ENCODE measurements at regions of chr19 and their contacts with region 1.

Region 1: GRCh38 chr19:53394974-53395839 is at the start of gene ZNF765:
- DNase-seq: peak; percentile 84
- H3K4me3 ChIP-seq: peak within 1 kb of the TSS; percentile 64 to 99 (median 71)
- H3K27ac ChIP-seq: peak within 1 kb of the TSS; percentile 91
- H3K4me1 ChIP-seq: peaks cover 4% of the 10 kb centered on the region
- H3K27me3 ChIP-seq: no peaks in the 10 kb centered on the region
- CTCF ChIP-seq: peak in 1 of 2 donors; percentile 54
- total RNA-seq, gene ZNF765: 6.7 to 10.5 TPM

Region 2: DNA sequence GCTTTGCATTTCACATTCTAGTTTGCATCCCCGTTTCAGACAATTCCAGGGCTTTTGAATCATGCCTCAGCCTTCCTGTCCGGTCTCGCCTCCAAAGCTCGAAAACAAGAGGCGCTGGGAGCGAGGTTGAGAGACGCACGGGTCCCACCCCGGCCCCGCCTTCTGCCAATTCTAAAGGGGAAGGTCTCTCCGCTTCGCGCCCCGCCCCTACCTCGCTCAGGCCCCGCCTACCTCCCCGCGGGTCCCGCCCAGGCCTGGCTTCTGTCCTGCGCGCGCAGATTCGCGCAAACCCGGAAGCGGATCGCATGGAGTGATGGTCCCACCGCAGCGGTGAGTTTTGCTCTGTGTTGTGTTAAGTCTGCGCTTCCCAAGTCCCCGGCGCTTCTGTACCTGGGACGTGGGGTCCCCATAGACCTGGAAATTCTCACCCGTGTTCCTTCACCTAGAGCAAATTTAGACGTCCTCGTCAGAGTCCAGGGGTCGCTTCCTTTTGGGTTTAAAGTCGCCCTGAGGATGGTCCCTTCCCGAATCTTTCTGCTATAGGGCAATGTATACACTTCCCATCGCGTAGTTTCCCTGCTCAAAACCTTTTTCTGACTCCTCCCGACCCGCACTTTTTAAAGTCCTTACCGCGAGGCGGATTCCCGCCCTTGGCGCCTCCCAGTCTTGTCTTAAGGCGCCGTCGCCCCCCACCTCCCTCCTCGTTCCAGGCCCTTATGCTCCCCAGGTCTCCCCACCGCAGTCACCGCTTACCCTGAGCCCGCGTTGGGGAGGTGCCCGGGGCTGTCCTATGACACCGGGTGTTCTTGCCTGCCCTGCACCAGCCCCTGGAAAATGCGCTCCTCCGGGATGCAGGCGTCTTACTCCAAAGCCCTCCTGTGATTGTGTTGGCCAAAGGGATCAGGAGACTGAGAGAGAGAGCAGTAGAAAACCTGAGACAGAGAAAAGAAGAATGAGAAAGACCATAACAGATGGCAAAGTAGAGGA is 61.5 kb before region 1 on chr19 and contains the start of gene ZNF845:
- CTCF ChIA-PET with region 1: no interaction called
- dilution Hi-C with region 1: no loop called
- in situ Hi-C with region 1: no loop called
- intact Hi-C with region 1: loop called (anchors 2 kb)
- DNase-seq: peak; percentile 93
- H3K4me3 ChIP-seq: peak within 1 kb of the TSS; percentile 67 to 77 (median 75)
- H3K27ac ChIP-seq: peak within 1 kb of the TSS; percentile 78
- H3K4me1 ChIP-seq: peaks cover 3% of the 10 kb centered on the region
- H3K27me3 ChIP-seq: no peaks in the 10 kb centered on the region
- CTCF ChIP-seq: no peak
- total RNA-seq, gene ZNF845: 4.1 to 8.3 TPM